Adrenal gland (tissue), 19 donors: ENCODE measurements at regions of chr4 and their contacts with region 1.

Region 1: DNA sequence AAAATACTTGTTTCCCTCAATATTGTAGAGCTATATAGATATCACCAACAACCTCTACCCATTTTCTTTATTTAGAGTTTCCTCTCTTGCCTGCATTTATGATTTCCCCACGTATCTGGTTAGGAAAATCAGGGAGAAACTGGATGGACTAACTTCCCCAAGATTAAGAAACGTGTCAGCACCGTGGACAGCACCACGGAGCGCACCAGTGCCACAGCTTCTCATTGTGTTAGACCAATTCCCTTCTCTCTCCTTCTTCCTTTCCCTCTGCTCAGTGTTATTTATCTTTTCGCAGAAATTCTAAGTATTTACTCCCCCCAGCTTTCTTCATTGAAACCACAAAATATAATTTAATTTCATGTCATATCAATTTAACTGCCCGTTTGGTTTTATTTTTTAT is 568.6 kb upstream of the BOD1L1 start:
- DNase-seq: peak; percentile 52 to 71 (median 67)
- H3K4me3 ChIP-seq: no peak overlapping the region
- H3K27ac ChIP-seq: no peak overlapping the region
- H3K4me1 ChIP-seq: no peaks in the 10 kb centered on the region
- H3K27me3 ChIP-seq: no peaks in the 10 kb centered on the region
- CTCF ChIP-seq: no peak
- POLR2A ChIP-seq: no peak

Region 2: GRCh38 chr4:13298655-13299054 is 897.5 kb before region 1 on chr4:
- intact Hi-C with region 1: no loop called
- DNase-seq: no peak
- H3K4me3 ChIP-seq: no peak overlapping the region
- H3K27ac ChIP-seq: no peak overlapping the region
- H3K4me1 ChIP-seq: no peaks in the 10 kb centered on the region
- H3K27me3 ChIP-seq: no peaks in the 10 kb centered on the region
- CTCF ChIP-seq: no peak
- POLR2A ChIP-seq: no peak

Region 3: GRCh38 chr4:13694256-13694655 is 501.9 kb before region 1 on chr4:
- intact Hi-C with region 1: loop called in 1 of 2 experiments (anchors 5 kb)
- DNase-seq: peak in 1 of 7 donors; percentile 8
- H3K4me3 ChIP-seq: no peak overlapping the region
- H3K27ac ChIP-seq: no peak overlapping the region
- H3K4me1 ChIP-seq: no peaks in the 10 kb centered on the region
- H3K27me3 ChIP-seq: no peaks in the 10 kb centered on the region
- CTCF ChIP-seq: no peak
- POLR2A ChIP-seq: no peak